Dorsolateral prefrontal cortex (tissue), 120 donors: ENCODE measurements at regions of chr13 and their contacts with region 1.

Region 1: GRCh38 chr13:33542283-33543088 is 256.9 kb upstream of the STARD13 start:
- DNase-seq: peak; percentile 94 to 98 (median 96)
- H3K4me3 ChIP-seq: peak overlapping the region; percentile 41 to 80 (median 68)
- H3K27ac ChIP-seq: peak overlapping the region; percentile 96 to 100 (median 100)
- H3K27me3 ChIP-seq: no peaks in the 10 kb centered on the region
- CTCF ChIP-seq: peak; percentile 81 to 99 (median 96)

Region 2: DNA sequence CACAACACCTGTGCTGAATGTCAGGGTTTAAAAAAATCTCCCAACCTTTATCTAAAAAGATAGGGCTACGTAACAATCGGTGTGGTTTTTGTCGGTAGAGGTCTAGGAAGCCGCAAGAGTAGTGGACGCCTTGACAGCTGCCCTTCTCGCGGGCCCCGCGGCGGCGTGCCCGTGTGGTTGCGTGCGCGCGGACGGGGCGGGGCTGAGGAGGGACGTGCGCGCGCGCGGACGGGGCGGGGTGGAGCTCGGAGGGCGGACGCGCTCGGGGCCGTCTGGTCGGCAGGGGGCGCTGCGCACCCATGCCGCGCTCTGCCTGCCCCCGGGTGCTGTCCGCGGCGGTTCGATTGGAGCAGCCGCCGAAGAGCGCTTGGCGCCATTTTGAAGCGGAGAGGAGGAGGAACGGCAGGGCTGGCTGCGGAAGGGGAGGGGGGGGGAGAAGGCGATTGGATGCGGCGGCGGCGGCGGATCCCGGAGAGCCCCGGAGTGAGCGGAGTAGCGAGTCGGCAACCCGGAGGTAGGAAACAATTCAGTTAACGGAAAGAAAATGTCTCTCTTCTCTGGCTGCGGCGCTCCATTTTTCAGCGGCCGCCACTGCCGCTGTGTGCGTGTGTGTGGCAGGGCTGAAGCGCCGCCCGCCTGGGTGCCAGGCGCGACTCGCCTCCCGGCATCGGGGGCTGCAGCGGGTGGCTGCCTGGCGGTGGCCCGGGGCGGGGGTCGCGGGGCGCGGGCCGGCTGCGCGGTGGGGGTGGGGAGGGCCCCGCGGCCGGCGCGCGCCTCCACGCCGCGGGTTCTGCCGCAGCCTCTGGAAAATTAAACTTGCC is 956.2 kb before region 1 on chr13 and contains the start of gene PDS5B:
- intact Hi-C with region 1: loop called (anchors 1 kb)
- DNase-seq: peak; percentile 79 to 97 (median 92)
- H3K4me3 ChIP-seq: peak within 1 kb of the TSS; percentile 59 to 98 (median 82)
- H3K27ac ChIP-seq: peak within 1 kb of the TSS; percentile 83 to 99 (median 97)
- H3K27me3 ChIP-seq: no peaks in the 10 kb centered on the region
- CTCF ChIP-seq: peak; percentile 57 to 98 (median 90)
- total RNA-seq, gene PDS5B: 55.6 to 161 (median 108) TPM

Region 3: DNA sequence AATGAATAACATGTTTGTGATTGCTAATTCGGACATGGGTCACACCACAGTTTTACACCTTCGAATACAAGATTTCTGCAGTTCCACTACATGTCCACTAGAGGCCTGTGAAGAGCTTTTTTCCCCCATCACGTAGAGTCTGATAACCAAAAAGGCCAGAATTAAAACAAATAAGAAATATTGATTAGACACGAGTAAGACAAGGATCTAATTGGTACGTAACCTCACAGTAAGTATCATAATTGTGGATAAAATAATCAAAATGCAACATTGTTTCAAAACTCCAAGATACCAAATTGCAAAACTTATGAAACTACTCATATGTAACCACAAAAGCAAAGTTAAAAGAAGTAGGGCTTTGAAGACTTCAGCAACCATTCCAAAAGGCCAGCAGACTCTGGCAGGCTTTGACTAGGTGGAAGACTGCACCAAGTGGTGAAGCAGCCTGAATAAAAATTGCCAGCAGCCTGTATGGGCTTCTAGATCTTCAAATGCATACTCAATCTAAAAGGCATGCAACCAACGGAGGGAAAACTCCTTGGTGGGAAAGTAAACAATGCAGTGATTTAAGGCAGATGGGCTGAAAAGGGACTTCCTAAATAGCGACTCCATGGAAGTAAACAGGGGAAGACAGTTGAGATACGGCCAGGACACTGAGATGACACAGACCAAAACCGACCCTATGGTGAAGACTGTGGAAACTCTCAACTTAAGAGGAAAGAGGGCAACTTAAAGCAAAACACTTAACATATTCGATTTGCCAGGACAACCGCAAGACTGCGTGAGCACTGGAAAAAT is 313.6 kb before region 1 on chr13:
- intact Hi-C with region 1: loop called (anchors 5 kb)
- DNase-seq: no peak
- H3K4me3 ChIP-seq: peak overlapping the region in 42 of 59 donors; percentile 1 to 51 (median 21)
- H3K27ac ChIP-seq: peak overlapping the region; percentile 40 to 97 (median 91)
- H3K27me3 ChIP-seq: no peaks in the 10 kb centered on the region
- CTCF ChIP-seq: peak; percentile 73 to 95 (median 89)

Region 4: GRCh38 chr13:33633701-33634545 is 91.4 kb after region 1 on chr13:
- intact Hi-C with region 1: loop called in 1 of 2 experiments (anchors 2 kb)
- DNase-seq: peak in 2 of 10 donors; percentile 36 to 59
- H3K4me3 ChIP-seq: peak overlapping the region in 34 of 59 donors; percentile 2 to 50 (median 20)
- H3K27ac ChIP-seq: peak overlapping the region in 58 of 59 donors; percentile 74 to 98 (median 92)
- H3K27me3 ChIP-seq: no peaks in the 10 kb centered on the region
- CTCF ChIP-seq: peak in 4 of 56 donors; percentile 6 to 18 (median 12)

Region 5: GRCh38 chr13:33723772-33724435 is 181.4 kb after region 1 on chr13:
- intact Hi-C with region 1: loop called (anchors 2 kb)
- DNase-seq: peak; percentile 42 to 91 (median 80)
- H3K4me3 ChIP-seq: peak overlapping the region in 1 of 59 donors; percentile 12
- H3K27ac ChIP-seq: peak overlapping the region in 50 of 59 donors; percentile 2 to 76 (median 46)
- H3K27me3 ChIP-seq: no peaks in the 10 kb centered on the region
- CTCF ChIP-seq: peak; percentile 61 to 97 (median 85)